ENCODE measurements at regions of chr3 and their contacts with region 1.

Region 1: DNA sequence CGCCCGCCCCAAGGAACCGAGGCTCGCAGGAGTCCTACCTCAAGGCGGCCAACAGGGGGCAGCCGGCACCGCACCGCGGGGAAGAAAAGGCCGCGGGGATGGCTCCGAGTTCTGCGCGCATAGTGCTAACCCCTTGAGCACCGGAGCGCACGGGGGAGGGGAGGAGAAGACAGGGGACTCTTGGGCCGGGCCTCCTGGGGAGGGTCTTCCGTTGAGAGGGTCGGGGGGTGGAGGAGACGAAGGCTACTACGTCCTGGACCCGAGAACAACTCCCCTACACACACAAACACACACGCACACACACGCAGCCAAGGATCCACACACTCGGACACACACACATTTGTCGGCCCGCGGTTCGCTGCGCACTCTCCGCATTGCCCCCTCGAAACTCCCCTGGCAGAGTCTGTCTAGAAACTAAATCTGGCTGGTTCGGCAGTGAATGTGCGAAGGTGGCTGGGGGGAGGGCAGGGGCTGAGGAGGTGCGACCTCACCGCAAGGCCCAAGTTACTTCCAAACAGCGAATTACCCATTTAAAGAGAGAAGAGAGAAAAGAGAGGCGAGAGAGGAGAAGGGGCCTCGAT is 1.8 kb downstream of the WNT5A start:
- DNase-seq: peak; percentile 68 to 83 (median 75)
- ATAC-seq: peak; percentile 80
- H3K4me3 ChIP-seq: no peak overlapping the region
- H3K4me1 ChIP-seq: peaks cover 46% of the 10 kb centered on the region
- CTCF ChIP-seq: peak; percentile 71

Region 2: GRCh38 chr3:55405436-55405835 is 79.9 kb before region 1 on chr3:
- intact Hi-C with region 1: no loop called
- DNase-seq: no peak
- ATAC-seq: no peak
- H3K4me3 ChIP-seq: no peak overlapping the region
- H3K4me1 ChIP-seq: no peaks in the 10 kb centered on the region
- CTCF ChIP-seq: no peak

Region 3: GRCh38 chr3:55721716-55722484 is 236.6 kb after region 1 on chr3:
- intact Hi-C with region 1: loop called (anchors 5 kb)
- DNase-seq: peak in 2 of 3 donors; percentile 33 to 50
- ATAC-seq: peak; percentile 39
- H3K4me3 ChIP-seq: no peak overlapping the region
- H3K4me1 ChIP-seq: no peaks in the 10 kb centered on the region
- CTCF ChIP-seq: no peak

Region 4: GRCh38 chr3:56251343-56251945 is 766.1 kb after region 1 on chr3:
- intact Hi-C with region 1: loop called in 1 of 2 experiments (anchors 10 kb)
- DNase-seq: peak in 1 of 3 donors; percentile 67
- ATAC-seq: peak; percentile 38
- H3K4me3 ChIP-seq: no peak overlapping the region
- H3K4me1 ChIP-seq: no peaks in the 10 kb centered on the region
- CTCF ChIP-seq: peak; percentile 55

Measured in mucosa of descending colon (tissue), 3 donors.